Left colon (tissue), 2 donors: ENCODE measurements at regions of chr12 and their contacts with region 1.

Region 1: GRCh38 chr12:78002878-78003277 is 172.2 kb downstream of the NAV3 start:
- DNase-seq: no peak
- ATAC-seq: no peak

Region 2: GRCh38 chr12:78120866-78121560 is 118.1 kb after region 1 on chr12:
- intact Hi-C with region 1: loop called in 1 of 2 experiments (anchors 10 kb)
- DNase-seq: no peak
- ATAC-seq: no peak